PC-9 (cell line): ENCODE measurements at regions of chr14 and their contacts with region 1.

Region 1: GRCh38 chr14:103576371-103577024 is 13.7 kb downstream of the COA8 start:
- DNase-seq: peak; percentile 97
- H3K4me3 ChIP-seq: no peak overlapping the region
- H3K27ac ChIP-seq: peak overlapping the region; percentile 40
- H3K4me1 ChIP-seq: peaks cover 24% of the 10 kb centered on the region
- H3K27me3 ChIP-seq: no peaks in the 10 kb centered on the region
- CTCF ChIP-seq: no peak

Region 2: DNA sequence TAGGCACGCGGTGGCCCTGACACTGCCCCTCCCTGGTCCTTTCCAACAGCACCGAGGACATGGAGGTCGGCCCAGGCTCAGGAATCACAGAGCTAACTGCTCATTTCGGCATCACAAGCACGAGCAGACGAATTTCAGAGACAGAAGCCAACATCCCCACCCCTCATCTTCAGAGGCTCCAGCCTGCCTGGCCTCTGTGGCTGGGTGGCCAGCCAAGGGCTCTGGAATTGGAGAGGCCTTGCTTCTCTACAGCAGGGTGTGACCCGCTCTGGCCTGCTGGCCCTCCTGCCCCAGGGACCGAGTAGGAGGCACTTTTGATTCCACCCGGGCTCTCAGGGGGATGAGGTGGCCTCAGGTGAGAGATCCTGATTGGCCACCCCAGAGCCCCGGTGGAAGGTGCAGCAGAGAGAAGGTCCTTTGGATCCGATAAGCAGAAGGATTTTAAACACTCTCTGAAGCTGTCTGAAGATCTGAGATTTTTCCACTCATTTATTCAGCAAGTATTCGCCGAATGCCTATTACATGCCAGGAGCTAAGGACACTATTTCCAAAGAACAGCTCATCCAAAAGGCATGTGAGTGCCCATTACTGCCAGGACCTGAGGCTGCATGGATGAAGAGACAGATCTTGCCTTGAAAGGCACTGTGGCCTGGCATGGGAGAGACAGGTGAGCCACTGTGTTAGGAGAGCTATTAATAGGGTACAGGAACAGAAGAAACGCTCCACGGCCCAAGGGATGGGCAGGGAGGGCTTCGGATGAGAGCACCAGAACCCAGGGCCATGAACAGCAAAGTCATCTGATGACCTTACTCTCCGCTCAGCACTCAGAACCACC is 24.3 kb before region 1 on chr14:
- CTCF ChIA-PET with region 1: no interaction called
- POLR2A ChIA-PET with region 1: no interaction called
- intact Hi-C with region 1: no loop called
- DNase-seq: peak; percentile 73 to 78
- H3K4me3 ChIP-seq: no peak overlapping the region
- H3K27ac ChIP-seq: 0 out of 2 replicates have a peak overlapping the region, but pooled peaks have one; percentile 1
- H3K4me1 ChIP-seq: peaks cover 12% of the 10 kb centered on the region; the same call in 1 of the 2 replicates
- H3K27me3 ChIP-seq: no peaks in the 10 kb centered on the region
- CTCF ChIP-seq: no peak

Region 3: GRCh38 chr14:103562429-103563225 is 13.9 kb before region 1 on chr14 and contains the starts of genes BAG5 and COA8:
- CTCF ChIA-PET with region 1: no interaction called
- POLR2A ChIA-PET with region 1: interaction called, 10 read pairs
- intact Hi-C with region 1: no loop called
- DNase-seq: peak; percentile 86 to 98
- H3K4me3 ChIP-seq: peak within 1 kb of the TSS; percentile 87
- H3K27ac ChIP-seq: peak within 1 kb of the TSS; percentile 76
- H3K4me1 ChIP-seq: peaks cover 49% of the 10 kb centered on the region
- H3K27me3 ChIP-seq: no peaks in the 10 kb centered on the region
- CTCF ChIP-seq: peak; percentile 31; the same call in 1 of the 2 replicates
- total RNA-seq, gene BAG5: 61.5 and 76.5 TPM in 2 replicates
- total RNA-seq, gene COA8: 93.8 and 101 TPM in 2 replicates

Region 4: DNA sequence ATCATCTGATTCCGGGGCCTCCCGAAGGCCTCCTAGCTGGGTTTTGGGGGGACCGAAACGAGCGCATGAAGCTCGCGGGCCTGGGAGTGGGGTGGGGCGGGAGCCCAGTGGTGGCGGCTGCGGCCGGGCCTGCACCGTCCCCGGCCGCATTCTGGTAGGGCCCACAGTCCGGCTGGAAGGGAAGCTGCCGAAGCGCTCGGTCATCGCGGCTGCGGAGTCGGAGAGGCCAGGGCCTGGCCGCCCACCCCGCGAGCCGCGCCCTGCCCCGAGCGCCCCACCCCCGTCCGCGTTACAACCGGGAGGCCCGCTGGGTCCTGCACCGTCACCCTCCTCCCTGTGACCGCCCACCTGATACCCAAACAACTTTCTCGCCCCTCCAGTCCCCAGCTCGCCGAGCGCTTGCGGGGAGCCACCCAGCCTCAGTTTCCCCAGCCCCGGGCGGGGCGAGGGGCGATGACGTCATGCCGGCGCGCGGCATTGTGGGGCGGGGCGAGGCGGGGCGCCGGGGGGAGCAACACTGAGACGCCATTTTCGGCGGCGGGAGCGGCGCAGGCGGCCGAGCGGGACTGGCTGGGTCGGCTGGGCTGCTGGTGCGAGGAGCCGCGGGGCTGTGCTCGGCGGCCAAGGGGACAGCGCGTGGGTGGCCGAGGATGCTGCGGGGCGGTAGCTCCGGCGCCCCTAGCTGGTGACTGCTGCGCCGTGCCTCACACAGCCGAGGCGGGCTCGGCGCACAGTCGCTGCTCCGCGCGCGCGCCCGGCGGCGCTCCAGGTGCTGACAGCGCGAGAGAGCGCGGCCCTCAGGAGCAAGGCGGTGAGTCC is 52.4 kb after region 1 on chr14 and contains the start of gene KLC1:
- CTCF ChIA-PET with region 1: no interaction called
- POLR2A ChIA-PET with region 1: no interaction called
- intact Hi-C with region 1: loop called (anchors 1 kb)
- DNase-seq: peak; percentile 57 to 90
- H3K4me3 ChIP-seq: peak within 1 kb of the TSS; percentile 81
- H3K27ac ChIP-seq: peak within 1 kb of the TSS; percentile 92
- H3K4me1 ChIP-seq: peaks cover 50% of the 10 kb centered on the region
- H3K27me3 ChIP-seq: no peaks in the 10 kb centered on the region
- CTCF ChIP-seq: no peak
- total RNA-seq, gene KLC1: 254 and 331 TPM in 2 replicates

Region 5: DNA sequence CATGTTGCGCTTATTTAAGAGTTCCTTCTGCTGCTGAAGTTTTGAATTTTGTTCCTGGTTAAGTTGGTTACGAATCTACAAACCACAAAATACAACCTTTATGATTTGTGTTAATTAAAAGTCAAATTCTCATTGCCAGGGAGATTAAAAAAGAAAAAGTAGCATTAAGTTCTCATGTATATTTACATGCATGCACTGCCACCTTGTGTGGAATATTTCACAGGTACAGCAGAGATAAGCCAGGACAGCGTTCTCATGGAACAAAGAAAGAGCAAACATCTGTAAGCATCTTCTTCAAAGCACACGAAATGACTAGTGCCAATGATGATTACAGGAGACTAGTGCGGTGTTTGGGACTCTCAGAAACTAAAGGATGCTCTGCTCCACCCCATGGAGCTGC is 173.4 kb after region 1 on chr14:
- CTCF ChIA-PET with region 1: no interaction called
- POLR2A ChIA-PET with region 1: no interaction called
- intact Hi-C with region 1: loop called (anchors 1 kb)
- DNase-seq: no peak
- H3K4me3 ChIP-seq: no peak overlapping the region
- H3K27ac ChIP-seq: no peak overlapping the region
- H3K4me1 ChIP-seq: peaks cover 10% of the 10 kb centered on the region
- H3K27me3 ChIP-seq: no peaks in the 10 kb centered on the region
- CTCF ChIP-seq: peak; percentile 47

Region 6: GRCh38 chr14:103910262-103910935 is 333.9 kb after region 1 on chr14:
- CTCF ChIA-PET with region 1: no interaction called
- POLR2A ChIA-PET with region 1: no interaction called
- intact Hi-C with region 1: loop called (anchors 1 kb)
- DNase-seq: peak; percentile 84 to 93
- H3K4me3 ChIP-seq: no peak overlapping the region
- H3K27ac ChIP-seq: no peak overlapping the region
- H3K4me1 ChIP-seq: 0 out of 2 replicates have a peak, but pooled peaks cover 3% of the 10 kb centered on the region
- H3K27me3 ChIP-seq: no peaks in the 10 kb centered on the region
- CTCF ChIP-seq: peak; percentile 87

Region 7: DNA sequence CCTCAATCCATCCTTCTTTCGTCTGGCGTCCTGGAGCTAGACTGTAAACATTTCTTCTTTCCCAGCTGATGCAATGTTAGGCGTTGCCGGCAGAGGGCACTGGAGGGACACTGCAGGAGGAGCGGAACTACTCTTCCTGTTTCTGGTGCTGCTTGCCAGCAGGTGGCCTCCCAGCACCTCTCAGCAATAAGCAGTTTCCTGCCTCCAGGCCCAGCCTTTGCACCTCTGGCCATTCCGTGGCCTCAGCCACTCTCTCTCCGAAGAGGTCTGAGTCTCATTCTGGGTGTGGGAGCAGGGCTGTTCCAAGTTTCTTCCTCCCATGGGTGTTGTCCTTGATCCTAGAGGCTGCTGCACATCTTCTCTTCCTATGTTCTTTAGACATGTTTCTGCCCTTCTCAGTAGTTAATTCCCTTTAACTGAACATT is 501.5 kb after region 1 on chr14:
- CTCF ChIA-PET with region 1: no interaction called
- POLR2A ChIA-PET with region 1: no interaction called
- intact Hi-C with region 1: loop called (anchors 10 kb)
- DNase-seq: peak; percentile 77 to 85
- H3K4me3 ChIP-seq: no peak overlapping the region
- H3K27ac ChIP-seq: no peak overlapping the region
- H3K4me1 ChIP-seq: no peaks in the 10 kb centered on the region
- H3K27me3 ChIP-seq: peaks cover 10% of the 10 kb centered on the region; the same call in 1 of the 2 replicates
- CTCF ChIP-seq: peak; percentile 99